ENCODE measurements at regions of chr17 and their contacts with region 1.

Region 1: GRCh38 chr17:64661976-64662773 is at the start of gene SMURF2:
- DNase-seq: peak; percentile 73 to 89 (median 83)
- H3K4me3 ChIP-seq: peak within 1 kb of the TSS; percentile 85
- H3K4me3 Mint-ChIP-seq: peak within 1 kb of the TSS; percentile 97 to 100 (median 99)
- H3K27ac ChIP-seq: peak within 1 kb of the TSS; percentile 64
- H3K27ac Mint-ChIP-seq: peak within 1 kb of the TSS; percentile 94 to 99 (median 96)
- H3K4me1 ChIP-seq: peaks cover 22% of the 10 kb centered on the region
- H3K4me1 Mint-ChIP-seq: peaks cover 33 to 47% (median 44%) of the 10 kb centered on the region in 3 donors
- H3K27me3 ChIP-seq: no peaks in the 10 kb centered on the region
- H3K27me3 Mint-ChIP-seq: no peaks in the 10 kb centered on the region
- total RNA-seq, gene SMURF2: 18.9 to 19.0 TPM

Region 2: GRCh38 chr17:64676763-64677162 is 14.6 kb after region 1 on chr17:
- CTCF ChIA-PET with region 1: no interaction called
- POLR2A ChIA-PET with region 1: no interaction called
- DNase-seq: no peak
- H3K4me3 ChIP-seq: no peak overlapping the region
- H3K4me3 Mint-ChIP-seq: no peak overlapping the region
- H3K27ac ChIP-seq: no peak overlapping the region
- H3K27ac Mint-ChIP-seq: no peak overlapping the region
- H3K4me1 ChIP-seq: no peaks in the 10 kb centered on the region
- H3K4me1 Mint-ChIP-seq: no peaks in the 10 kb centered on the region
- H3K27me3 ChIP-seq: no peaks in the 10 kb centered on the region
- H3K27me3 Mint-ChIP-seq: no peaks in the 10 kb centered on the region

Region 3: GRCh38 chr17:64709481-64709880 is 47.3 kb after region 1 on chr17:
- CTCF ChIA-PET with region 1: no interaction called
- POLR2A ChIA-PET with region 1: interaction called, 17 read pairs
- DNase-seq: no peak
- H3K4me3 ChIP-seq: peak overlapping the region; percentile 27
- H3K4me3 Mint-ChIP-seq: peak overlapping the region; percentile 56 to 82 (median 64)
- H3K27ac ChIP-seq: peak overlapping the region; percentile 41
- H3K27ac Mint-ChIP-seq: peak overlapping the region; percentile 88 to 99 (median 95)
- H3K4me1 ChIP-seq: peaks cover 65% of the 10 kb centered on the region
- H3K4me1 Mint-ChIP-seq: peaks cover 68 to 82% (median 81%) of the 10 kb centered on the region in 3 donors
- H3K27me3 ChIP-seq: no peaks in the 10 kb centered on the region
- H3K27me3 Mint-ChIP-seq: peaks cover 0 to 2% of the 10 kb centered on the region in 2 donors